Ovary (tissue), 10 donors: ENCODE measurements at regions of chr5 and their contacts with region 1.

Region 1: GRCh38 chr5:159786901-159787691 is 129.2 kb upstream of the ADRA1B start:
- DNase-seq: peak in 4 of 5 donors; percentile 36 to 71 (median 52)
- H3K4me3 ChIP-seq: no peak overlapping the region
- H3K27ac ChIP-seq: peak overlapping the region in 1 of 2 donors; percentile 41
- H3K4me1 ChIP-seq: peaks cover 6% of the 10 kb centered on the region
- H3K27me3 ChIP-seq: no peaks in the 10 kb centered on the region
- CTCF ChIP-seq: no peak
- EP300 ChIP-seq: peak; percentile 23
- POLR2A ChIP-seq: no peak

Region 2: GRCh38 chr5:159393854-159394274 is 393.2 kb before region 1 on chr5:
- intact Hi-C with region 1: no loop called
- DNase-seq: no peak
- H3K4me3 ChIP-seq: no peak overlapping the region
- H3K27ac ChIP-seq: no peak overlapping the region
- H3K4me1 ChIP-seq: no peaks in the 10 kb centered on the region
- H3K27me3 ChIP-seq: no peaks in the 10 kb centered on the region
- CTCF ChIP-seq: no peak
- EP300 ChIP-seq: no peak
- POLR2A ChIP-seq: no peak

Region 3: DNA sequence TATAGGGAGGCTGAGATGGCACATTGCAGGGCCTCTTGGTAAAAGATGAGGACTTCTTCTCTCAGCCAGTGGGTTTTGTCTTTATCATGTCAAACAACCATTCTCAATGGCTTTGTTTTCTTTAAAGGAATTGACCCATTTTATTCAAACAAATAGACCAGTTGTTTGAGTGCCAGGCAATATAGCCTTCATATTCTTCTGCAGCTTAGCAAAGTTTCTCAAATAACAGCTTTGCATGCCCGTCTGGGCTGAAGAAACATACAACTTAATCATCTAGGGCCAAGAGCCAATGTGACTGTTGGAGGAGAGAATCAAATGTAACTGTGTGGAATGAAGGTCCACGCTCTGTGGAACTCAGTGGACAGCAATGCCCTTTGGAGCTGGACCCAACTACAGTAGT is 71.8 kb after region 1 on chr5:
- intact Hi-C with region 1: loop called in 1 of 4 experiments (anchors 2 kb)
- DNase-seq: no peak
- H3K4me3 ChIP-seq: no peak overlapping the region
- H3K27ac ChIP-seq: no peak overlapping the region
- H3K4me1 ChIP-seq: no peaks in the 10 kb centered on the region
- H3K27me3 ChIP-seq: no peaks in the 10 kb centered on the region
- CTCF ChIP-seq: no peak
- EP300 ChIP-seq: no peak
- POLR2A ChIP-seq: no peak

Region 4: DNA sequence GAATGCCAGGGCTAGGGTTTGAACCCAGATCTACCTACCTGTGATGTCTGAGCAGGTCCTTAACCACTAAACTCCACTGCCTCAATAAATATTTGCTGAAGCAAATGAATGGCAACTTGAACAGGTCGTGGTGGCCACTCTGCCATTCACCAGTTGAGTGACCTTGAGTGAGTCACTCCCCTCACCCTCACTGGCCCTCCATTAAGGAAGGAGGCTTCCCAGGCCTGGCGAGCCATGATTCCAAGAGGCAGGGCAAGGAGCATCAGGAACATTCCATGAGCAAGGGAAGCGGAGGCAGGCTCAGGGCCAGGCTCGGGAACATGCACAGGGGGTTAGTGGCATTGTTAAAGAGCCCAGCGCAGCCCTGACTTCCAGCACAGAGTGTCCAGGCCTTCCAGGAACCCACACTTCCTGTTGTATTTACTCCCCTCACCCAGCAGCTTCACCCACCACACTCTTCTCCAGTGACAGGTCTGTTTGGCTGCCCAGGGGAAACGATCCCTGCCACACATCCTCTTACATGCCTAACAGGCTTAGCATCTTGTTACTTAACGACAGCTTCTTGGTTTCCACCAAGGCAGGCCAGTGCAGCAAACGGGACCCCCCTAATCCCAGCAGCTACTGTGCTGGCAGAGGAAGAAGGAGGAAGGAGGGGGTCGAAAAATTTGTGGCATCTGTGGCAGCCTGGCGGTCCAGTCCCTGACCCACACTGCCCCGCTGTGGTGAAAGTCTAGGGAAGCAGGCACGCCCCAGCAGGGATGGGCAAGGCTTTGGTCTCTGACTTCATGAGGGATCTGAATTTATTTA is 178.1 kb after region 1 on chr5:
- intact Hi-C with region 1: no loop called
- DNase-seq: peak; percentile 40 to 67 (median 48)
- H3K4me3 ChIP-seq: no peak overlapping the region
- H3K27ac ChIP-seq: no peak overlapping the region
- H3K4me1 ChIP-seq: no peaks in the 10 kb centered on the region
- H3K27me3 ChIP-seq: no peaks in the 10 kb centered on the region
- CTCF ChIP-seq: peak in 1 of 3 donors; percentile 30
- EP300 ChIP-seq: no peak
- POLR2A ChIP-seq: no peak

Region 5: GRCh38 chr5:160616712-160617497 is 829.8 kb after region 1 on chr5:
- intact Hi-C with region 1: no loop called
- DNase-seq: no peak
- H3K4me3 ChIP-seq: no peak overlapping the region
- H3K27ac ChIP-seq: no peak overlapping the region
- H3K4me1 ChIP-seq: no peaks in the 10 kb centered on the region
- H3K27me3 ChIP-seq: no peaks in the 10 kb centered on the region
- CTCF ChIP-seq: no peak
- EP300 ChIP-seq: no peak
- POLR2A ChIP-seq: no peak